ENCODE measurements at regions of chr3 and their contacts with region 1.

Region 1: GRCh38 chr3:190224863-190225692 is 97.2 kb downstream of the CLDN1 start:
- DNase-seq: peak; percentile 7 to 48 (median 44)
- H3K4me3 ChIP-seq: no peak overlapping the region
- H3K4me3 Mint-ChIP-seq: no peak overlapping the region
- H3K27ac ChIP-seq: no peak overlapping the region
- H3K27ac Mint-ChIP-seq: peak overlapping the region in 1 of 7 donors; percentile 4
- H3K4me1 ChIP-seq: peaks cover 0 to 12% of the 10 kb centered on the region in 2 donors
- H3K4me1 Mint-ChIP-seq: peaks cover 7% of the 10 kb centered on the region
- H3K27me3 ChIP-seq: peaks cover 20% of the 10 kb centered on the region in 2 donors
- H3K27me3 Mint-ChIP-seq: peaks cover 5 to 20% (median 13%) of the 10 kb centered on the region in 3 donors
- CTCF ChIP-seq: peak; percentile 61

Region 2: GRCh38 chr3:190183121-190183520 is 42.0 kb before region 1 on chr3:
- intact Hi-C with region 1: no loop called
- DNase-seq: no peak
- H3K4me3 ChIP-seq: no peak overlapping the region
- H3K4me3 Mint-ChIP-seq: no peak overlapping the region
- H3K27ac ChIP-seq: no peak overlapping the region
- H3K27ac Mint-ChIP-seq: no peak overlapping the region
- H3K4me1 ChIP-seq: no peaks in the 10 kb centered on the region
- H3K4me1 Mint-ChIP-seq: no peaks in the 10 kb centered on the region
- H3K27me3 ChIP-seq: no peaks in the 10 kb centered on the region
- H3K27me3 Mint-ChIP-seq: peaks cover 0 to 2% (median 0%) of the 10 kb centered on the region in 3 donors
- CTCF ChIP-seq: no peak

Region 3: GRCh38 chr3:190265796-190266195 is 40.7 kb after region 1 on chr3:
- intact Hi-C with region 1: no loop called
- DNase-seq: no peak
- H3K4me3 ChIP-seq: no peak overlapping the region
- H3K4me3 Mint-ChIP-seq: no peak overlapping the region
- H3K27ac ChIP-seq: no peak overlapping the region
- H3K27ac Mint-ChIP-seq: no peak overlapping the region
- H3K4me1 ChIP-seq: no peaks in the 10 kb centered on the region
- H3K4me1 Mint-ChIP-seq: no peaks in the 10 kb centered on the region
- H3K27me3 ChIP-seq: no peaks in the 10 kb centered on the region
- H3K27me3 Mint-ChIP-seq: peaks cover 0 to 2% (median 0%) of the 10 kb centered on the region in 3 donors
- CTCF ChIP-seq: no peak

Region 4: DNA sequence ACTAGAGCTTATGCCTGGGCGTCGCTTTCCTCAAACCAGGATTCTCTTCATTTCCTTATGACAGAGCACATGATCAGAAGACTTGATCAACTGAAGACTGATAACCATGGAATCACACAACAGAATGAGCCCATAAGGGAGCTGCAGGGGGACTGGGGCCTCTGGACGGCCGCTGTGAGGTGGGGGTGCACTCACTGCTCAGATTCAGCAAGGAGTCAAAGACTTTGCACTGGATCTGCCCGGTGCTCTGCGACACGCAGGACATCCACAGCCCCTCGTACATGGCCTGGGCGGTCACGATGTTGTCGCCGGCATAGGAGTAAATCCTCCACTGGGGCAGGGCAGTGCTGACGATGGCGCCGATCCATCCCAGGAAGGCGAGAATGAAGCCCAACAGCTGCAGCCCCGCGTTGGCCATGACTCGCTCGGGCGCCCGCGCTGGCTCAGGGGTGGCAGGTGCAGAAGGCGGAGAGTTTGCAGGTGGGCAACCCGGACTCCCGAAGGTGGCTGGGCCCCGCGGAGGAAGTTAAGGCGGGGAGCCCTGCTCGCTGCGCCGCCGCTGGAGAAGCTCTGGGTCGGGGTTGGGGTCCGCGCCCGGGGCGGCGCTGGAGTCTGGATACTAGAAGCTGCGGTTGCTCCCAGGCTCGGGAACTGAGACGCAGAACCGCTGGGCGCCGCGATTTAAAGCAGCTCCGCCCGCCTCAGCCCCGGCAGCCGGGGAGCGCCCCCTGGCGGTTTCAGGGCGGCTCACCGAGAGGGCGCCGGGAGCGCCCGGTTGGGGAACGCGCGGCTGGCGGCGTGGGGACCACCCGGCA is 96.9 kb after region 1 on chr3 and contains the start of gene CLDN1:
- intact Hi-C with region 1: loop called (anchors 2 to 10 kb)
- DNase-seq: peak; percentile 33 to 57 (median 44)
- H3K4me3 ChIP-seq: peak within 1 kb of the TSS in 1 of 3 experiments; percentile 52
- H3K4me3 Mint-ChIP-seq: peak within 1 kb of the TSS; percentile 48 to 83
- H3K27ac ChIP-seq: no peak within 1 kb of the TSS
- H3K27ac Mint-ChIP-seq: peak within 1 kb of the TSS in 2 of 7 donors; percentile 9 to 43
- H3K4me1 ChIP-seq: peaks cover 15 to 17% of the 10 kb centered on the region in 2 donors
- H3K4me1 Mint-ChIP-seq: peaks cover 18% of the 10 kb centered on the region
- H3K27me3 ChIP-seq: peaks cover 18 to 49% of the 10 kb centered on the region in 2 donors
- H3K27me3 Mint-ChIP-seq: peaks cover 29 to 48% (median 39%) of the 10 kb centered on the region in 3 donors
- CTCF ChIP-seq: peak; percentile 98
- polyA plus RNA-seq, gene CLDN1: not detected

Region 5: DNA sequence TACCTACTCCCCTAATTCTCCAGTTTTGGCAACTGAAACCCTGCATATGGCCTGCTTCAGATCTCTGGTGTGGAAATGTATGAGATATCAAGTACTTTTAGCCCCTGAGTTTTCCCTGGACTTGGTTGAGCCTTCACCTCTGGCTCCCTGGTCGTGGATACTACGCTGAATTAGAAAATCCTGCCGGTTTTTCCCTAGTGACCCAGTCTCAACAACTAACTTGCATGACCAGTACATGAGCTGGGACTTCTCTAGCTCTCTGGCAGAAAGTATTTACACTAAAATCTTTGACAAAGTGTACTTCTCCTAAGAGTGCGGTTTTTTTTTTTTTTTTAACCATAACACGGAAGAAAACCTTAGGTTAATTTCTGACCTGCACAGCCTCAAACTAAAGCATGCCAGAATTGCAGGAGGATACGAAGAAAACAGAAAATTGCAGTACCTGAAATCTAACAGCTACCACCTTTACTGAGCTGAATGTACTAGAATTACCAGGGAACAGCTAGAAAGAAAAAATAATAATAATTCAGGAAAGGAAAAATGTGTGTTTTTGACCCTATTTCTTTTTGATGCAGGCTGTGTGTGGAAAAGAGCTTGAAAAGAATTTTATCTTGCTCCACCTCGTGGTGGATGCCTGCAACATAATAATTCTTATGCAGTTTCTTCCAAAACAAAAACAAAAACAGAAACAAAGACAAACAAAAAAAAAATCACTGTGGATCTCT is 471.9 kb after region 1 on chr3:
- intact Hi-C with region 1: loop called in 1 of 2 experiments (anchors 10 kb)
- DNase-seq: peak; percentile 9 to 37 (median 12)
- H3K4me3 ChIP-seq: no peak overlapping the region
- H3K4me3 Mint-ChIP-seq: no peak overlapping the region
- H3K27ac ChIP-seq: no peak overlapping the region
- H3K27ac Mint-ChIP-seq: peak overlapping the region in 2 of 7 donors; percentile 30 to 43
- H3K4me1 ChIP-seq: no peaks in the 10 kb centered on the region
- H3K4me1 Mint-ChIP-seq: peaks cover 4% of the 10 kb centered on the region
- H3K27me3 ChIP-seq: no peaks in the 10 kb centered on the region
- H3K27me3 Mint-ChIP-seq: peaks cover 0 to 2% (median 0%) of the 10 kb centered on the region in 3 donors
- CTCF ChIP-seq: peak; percentile 74

Region 6: GRCh38 chr3:190865828-190866227 is 640.8 kb after region 1 on chr3:
- intact Hi-C with region 1: no loop called
- DNase-seq: no peak
- H3K4me3 ChIP-seq: no peak overlapping the region
- H3K4me3 Mint-ChIP-seq: peak overlapping the region in 1 of 2 donors; percentile 36
- H3K27ac ChIP-seq: no peak overlapping the region
- H3K27ac Mint-ChIP-seq: no peak overlapping the region
- H3K4me1 ChIP-seq: peaks cover 4 to 5% of the 10 kb centered on the region in 2 donors
- H3K4me1 Mint-ChIP-seq: peaks cover 7% of the 10 kb centered on the region
- H3K27me3 ChIP-seq: peaks cover 28 to 47% of the 10 kb centered on the region in 2 donors
- H3K27me3 Mint-ChIP-seq: peaks cover 33 to 49% (median 43%) of the 10 kb centered on the region in 3 donors
- CTCF ChIP-seq: no peak